Activated CD8-positive, alpha-beta T cell treated with anti-CD3 and anti-CD28 coated beads for 36 hours (primary cell): ENCODE measurements at regions of chr11 and their contacts with region 1.

Region 1: GRCh38 chr11:6402561-6402981 is 12.3 kb downstream of the SMPD1 start:
- DNase-seq: peak; percentile 92
- ATAC-seq: peak; percentile 82
- H3K4me3 Mint-ChIP-seq: peak overlapping the region; percentile 50
- H3K27ac Mint-ChIP-seq: peak overlapping the region; percentile 93
- H3K4me1 Mint-ChIP-seq: peaks cover 75% of the 10 kb centered on the region
- H3K27me3 Mint-ChIP-seq: no peaks in the 10 kb centered on the region
- CTCF ChIP-seq: no peak

Region 2: DNA sequence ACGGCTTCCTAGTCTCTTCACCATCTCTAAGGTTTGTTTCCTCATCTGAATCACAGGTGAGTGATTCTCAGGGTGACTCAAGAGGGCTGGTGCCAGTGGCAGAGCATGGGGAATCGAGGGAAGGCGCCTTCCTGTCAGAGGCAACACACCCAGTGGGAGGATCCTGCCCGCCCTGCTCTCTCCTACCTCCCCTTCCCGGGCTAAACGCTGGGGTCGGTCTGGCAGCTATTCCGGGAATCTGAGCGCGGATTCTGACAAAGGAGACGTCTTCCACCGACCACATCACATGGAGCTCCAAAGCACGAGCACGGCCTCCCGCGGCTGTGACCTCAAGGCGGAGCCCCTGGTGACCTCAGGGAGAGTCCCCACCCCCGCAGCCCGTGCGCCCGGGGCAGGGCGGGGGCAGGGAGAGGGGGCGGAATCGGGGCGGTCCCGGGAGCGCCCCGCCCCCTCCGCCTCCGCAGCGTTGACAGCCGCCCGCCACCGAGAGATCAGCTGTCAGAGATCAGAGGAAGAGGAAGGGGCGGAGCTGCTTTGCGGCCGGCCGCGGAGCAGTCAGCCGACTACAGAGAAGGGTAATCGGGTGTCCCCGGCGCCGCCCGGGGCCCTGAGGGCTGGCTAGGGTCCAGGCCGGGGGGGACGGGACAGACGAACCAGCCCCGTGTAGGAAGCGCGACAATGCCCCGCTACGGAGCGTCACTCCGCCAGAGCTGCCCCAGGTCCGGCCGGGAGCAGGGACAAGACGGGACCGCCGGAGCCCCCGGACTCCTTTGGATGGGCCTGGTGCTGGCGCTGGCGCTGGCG is 12.4 kb before region 1 on chr11 and contains the start of gene SMPD1:
- CTCF ChIA-PET with region 1: interaction called, 45 read pairs
- POLR2A ChIA-PET with region 1: interaction called, 42 read pairs
- intact Hi-C with region 1: no loop called
- DNase-seq: peak; percentile 95
- ATAC-seq: peak; percentile 83
- H3K4me3 Mint-ChIP-seq: peak within 1 kb of the TSS; percentile 79
- H3K27ac Mint-ChIP-seq: peak within 1 kb of the TSS; percentile 94
- H3K4me1 Mint-ChIP-seq: peaks cover 44% of the 10 kb centered on the region
- H3K27me3 Mint-ChIP-seq: no peaks in the 10 kb centered on the region
- CTCF ChIP-seq: no peak
- total RNA-seq, gene SMPD1: 10.6 to 11.2 TPM